ENCODE measurements at regions of chr14 and their contacts with region 1.

Region 1: DNA sequence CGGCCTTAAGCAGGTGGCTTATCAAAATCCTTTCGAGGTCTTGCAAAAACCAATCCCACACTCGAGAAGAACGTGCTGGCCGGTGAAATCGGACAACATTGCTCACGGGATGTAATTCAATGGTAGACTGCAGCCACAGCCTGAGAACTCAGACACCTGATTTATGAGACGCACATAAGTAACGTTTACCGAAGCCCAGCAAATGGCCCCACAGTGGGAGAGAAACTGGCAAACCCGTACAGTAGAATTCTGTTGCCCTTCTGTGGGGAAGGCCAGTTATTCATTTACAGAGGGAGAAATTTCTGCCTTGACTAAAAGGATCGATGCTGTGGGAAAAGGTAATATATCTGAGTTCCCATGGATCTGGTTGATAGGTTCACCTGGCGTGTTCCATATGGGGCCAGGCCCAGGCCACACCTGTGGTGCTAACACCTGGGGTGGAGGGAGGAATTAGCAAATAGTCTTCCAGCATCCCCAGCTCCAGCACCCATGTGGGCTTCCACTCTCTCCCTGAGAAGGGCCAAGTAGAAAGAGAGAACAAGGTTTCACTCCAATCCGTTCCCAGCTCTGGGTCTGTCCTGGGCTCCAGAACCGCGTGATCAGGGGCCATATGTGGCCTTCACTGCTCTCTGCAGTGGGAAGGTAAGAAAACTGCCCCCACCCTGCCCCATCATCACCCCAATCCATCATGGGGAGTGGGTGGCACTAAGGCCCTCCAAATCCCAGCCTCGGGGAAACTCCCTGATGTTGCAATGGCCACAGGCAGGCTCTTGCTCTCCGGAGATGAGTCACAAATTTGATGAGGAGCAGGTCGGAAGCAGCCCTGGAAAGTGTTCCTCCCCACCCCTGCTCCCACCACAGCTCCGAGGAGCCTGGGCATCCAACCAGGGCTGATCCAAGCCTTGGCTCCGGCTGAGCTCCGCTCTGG is 12.7 kb downstream of the BDKRB1 start:
- DNase-seq: no peak
- H3K4me3 ChIP-seq: no peak overlapping the region
- H3K27ac ChIP-seq: no peak overlapping the region
- H3K27me3 ChIP-seq: no peaks in the 10 kb centered on the region
- CTCF ChIP-seq: no peak

Region 2: DNA sequence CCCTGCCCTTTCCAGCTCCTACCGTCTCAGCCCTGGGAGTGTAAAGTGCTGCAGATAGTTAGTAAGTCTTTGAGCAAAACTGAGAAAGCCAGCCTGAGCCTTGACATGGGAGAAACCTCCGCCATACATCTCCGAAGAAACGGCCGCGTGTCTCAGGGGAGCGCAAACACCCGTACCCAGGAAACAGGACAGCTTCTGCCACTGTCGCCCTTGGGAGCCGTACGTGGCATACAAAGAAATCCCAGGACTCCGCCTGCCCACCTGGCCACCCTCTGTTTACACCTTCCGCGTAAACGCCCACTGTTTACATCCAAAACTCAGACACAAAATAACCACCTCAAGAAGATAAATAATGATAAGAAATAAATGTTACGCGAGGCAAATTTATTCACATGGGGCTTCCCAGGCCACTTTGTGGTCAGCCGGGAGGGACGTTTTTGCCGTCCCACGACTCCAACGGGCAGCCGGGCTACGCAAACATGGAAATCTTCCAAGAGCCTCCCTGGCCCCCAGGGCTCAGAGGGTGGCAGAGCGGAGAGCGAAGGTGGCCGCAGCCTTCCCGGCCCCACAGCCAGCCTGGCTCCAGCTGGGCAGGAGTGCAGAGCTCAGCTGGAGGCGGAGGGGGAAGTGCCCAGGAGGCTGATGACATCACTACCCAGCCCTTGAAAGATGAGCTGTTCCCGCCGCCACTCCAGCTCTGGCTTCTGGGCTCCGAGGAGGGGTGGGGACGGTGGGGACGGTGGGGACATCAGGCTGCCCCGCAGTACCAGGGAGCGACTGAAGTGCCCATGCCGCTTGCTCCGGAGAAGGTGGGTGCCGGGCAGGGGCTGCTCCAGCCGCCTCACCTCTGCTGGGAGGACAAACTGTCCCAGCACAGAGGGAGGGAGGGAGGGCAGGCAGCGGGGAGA is 64.3 kb before region 1 on chr14 and contains the start of gene BDKRB2:
- intact Hi-C with region 1: loop called in 1 of 2 experiments (anchors 5 kb)
- DNase-seq: peak; percentile 28 to 84 (median 68)
- H3K4me3 ChIP-seq: peak within 1 kb of the TSS; percentile 32 to 79 (median 58)
- H3K27ac ChIP-seq: peak within 1 kb of the TSS in 35 of 59 donors; percentile 5 to 88 (median 69)
- H3K27me3 ChIP-seq: peaks cover 0 to 6% (median 0%) of the 10 kb centered on the region in 45 donors
- CTCF ChIP-seq: no peak
- total RNA-seq, gene BDKRB2: 0.23 to 3.5 (median 1.1) TPM